ENCODE measurements at regions of chr19 and their contacts with region 1.

Region 1: GRCh38 chr19:36054119-36054732 is at the start of gene THAP8:
- DNase-seq: peak; percentile 99 to 100 (median 100)
- ATAC-seq: peak; percentile 86
- H3K4me3 ChIP-seq: peak within 1 kb of the TSS; percentile 74 to 86
- H3K4me3 Mint-ChIP-seq: peak within 1 kb of the TSS; percentile 96
- H3K27ac ChIP-seq: peak within 1 kb of the TSS; percentile 95 to 96
- H3K27ac Mint-ChIP-seq: peak within 1 kb of the TSS; percentile 97
- H3K4me1 ChIP-seq: peaks cover 17% of the 10 kb centered on the region
- H3K4me1 Mint-ChIP-seq: peaks cover 27% of the 10 kb centered on the region
- H3K27me3 ChIP-seq: no peaks in the 10 kb centered on the region
- H3K27me3 Mint-ChIP-seq: no peaks in the 10 kb centered on the region
- CTCF ChIP-seq: peak; percentile 66
- total RNA-seq, gene THAP8: 0.31 to 0.57 TPM

Region 2: GRCh38 chr19:35748106-35749020 is 305.9 kb before region 1 on chr19 and contains the start of gene LIN37:
- CTCF ChIA-PET with region 1: no interaction called
- POLR2A ChIA-PET with region 1: no interaction called
- intact Hi-C with region 1: loop called (anchors 1 to 5 kb)
- DNase-seq: peak; percentile 97 to 100 (median 98)
- ATAC-seq: peak; percentile 72
- H3K4me3 ChIP-seq: peak within 1 kb of the TSS; percentile 84 to 99
- H3K4me3 Mint-ChIP-seq: peak within 1 kb of the TSS; percentile 98
- H3K27ac ChIP-seq: peak within 1 kb of the TSS; percentile 71 to 84
- H3K27ac Mint-ChIP-seq: peak within 1 kb of the TSS; percentile 95
- H3K4me1 ChIP-seq: peaks cover 41% of the 10 kb centered on the region
- H3K4me1 Mint-ChIP-seq: peaks cover 44% of the 10 kb centered on the region
- H3K27me3 ChIP-seq: no peaks in the 10 kb centered on the region
- H3K27me3 Mint-ChIP-seq: no peaks in the 10 kb centered on the region
- CTCF ChIP-seq: no peak
- total RNA-seq, gene LIN37: 5.5 to 9.3 TPM

Region 3: GRCh38 chr19:35856546-35857149 is 197.6 kb before region 1 on chr19 and contains the start of gene KIRREL2:
- CTCF ChIA-PET with region 1: no interaction called
- POLR2A ChIA-PET with region 1: no interaction called
- intact Hi-C with region 1: no loop called
- DNase-seq: peak in 6 of 9 experiments; percentile 10 to 57 (median 27)
- ATAC-seq: peak; percentile 62
- H3K4me3 ChIP-seq: peak within 1 kb of the TSS; percentile 60 to 71
- H3K4me3 Mint-ChIP-seq: peak within 1 kb of the TSS; percentile 84
- H3K27ac ChIP-seq: no peak within 1 kb of the TSS
- H3K27ac Mint-ChIP-seq: no peak within 1 kb of the TSS
- H3K4me1 ChIP-seq: peaks cover 12% of the 10 kb centered on the region
- H3K4me1 Mint-ChIP-seq: peaks cover 20% of the 10 kb centered on the region
- H3K27me3 ChIP-seq: peaks cover 15 to 21% of the 10 kb centered on the region in 2 experiments
- H3K27me3 Mint-ChIP-seq: peaks cover 52% of the 10 kb centered on the region
- CTCF ChIP-seq: no peak
- total RNA-seq, gene KIRREL2: 0.49 to 0.69 TPM

Region 4: DNA sequence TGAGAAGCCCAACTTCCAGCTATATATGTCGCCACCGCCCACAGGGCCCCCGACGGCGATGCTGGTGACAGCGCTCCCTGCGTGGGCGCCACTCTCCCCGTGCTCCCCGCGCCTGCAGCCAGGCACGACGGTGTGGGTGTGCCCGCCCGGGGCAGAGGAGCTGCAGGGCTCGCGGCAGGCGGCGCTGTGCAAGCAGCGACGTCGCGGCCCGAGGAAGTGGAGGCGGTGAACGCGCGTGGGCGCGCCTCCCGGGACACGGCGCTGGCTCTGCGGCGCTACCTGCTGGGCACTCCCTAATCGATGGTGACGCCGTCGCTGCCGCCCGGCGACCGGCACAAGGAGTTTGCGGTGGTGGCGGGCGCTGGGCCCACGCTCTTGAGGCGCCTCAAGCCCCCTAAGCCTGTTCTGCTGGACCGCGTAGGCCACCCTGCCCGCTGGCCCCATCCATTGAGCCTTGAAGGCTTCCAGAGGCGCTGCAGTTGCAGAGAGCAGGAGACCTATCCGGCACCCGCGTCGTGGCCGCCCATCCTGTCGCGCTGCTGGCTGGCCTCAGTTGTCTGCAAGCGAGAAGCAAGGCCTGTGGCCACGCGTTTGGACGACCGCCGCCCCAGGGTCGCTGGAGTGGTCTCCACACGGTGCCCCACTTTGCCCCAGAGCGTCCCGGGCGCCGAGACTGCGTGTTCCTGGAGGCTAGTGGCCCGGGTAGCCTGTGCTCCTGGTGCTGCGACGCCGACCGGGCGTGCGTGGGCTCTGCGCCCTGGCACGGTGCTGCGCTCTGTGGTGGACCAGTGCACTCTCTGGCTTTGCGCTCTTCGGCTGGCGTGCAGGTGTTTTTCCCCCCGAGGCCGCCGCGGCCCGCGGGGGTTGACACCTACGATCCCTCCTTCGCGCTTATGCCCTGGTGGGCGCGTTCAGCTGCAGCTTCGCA is 94.9 kb before region 1 on chr19:
- CTCF ChIA-PET with region 1: interaction called, 4 read pairs
- POLR2A ChIA-PET with region 1: interaction called, 3 read pairs
- intact Hi-C with region 1: loop called (anchors 1 to 5 kb)
- DNase-seq: peak; percentile 60 to 93 (median 82)
- ATAC-seq: peak; percentile 99
- H3K4me3 ChIP-seq: peak overlapping the region; percentile 57 to 62
- H3K4me3 Mint-ChIP-seq: peak overlapping the region; percentile 70
- H3K27ac ChIP-seq: peak overlapping the region in 1 of 2 experiments; percentile 25
- H3K27ac Mint-ChIP-seq: no peak overlapping the region
- H3K4me1 ChIP-seq: peaks cover 43% of the 10 kb centered on the region
- H3K4me1 Mint-ChIP-seq: peaks cover 37% of the 10 kb centered on the region
- H3K27me3 ChIP-seq: peaks cover 0 to 4% of the 10 kb centered on the region in 2 experiments
- H3K27me3 Mint-ChIP-seq: peaks cover 4% of the 10 kb centered on the region
- CTCF ChIP-seq: peak; percentile 77

Region 5: DNA sequence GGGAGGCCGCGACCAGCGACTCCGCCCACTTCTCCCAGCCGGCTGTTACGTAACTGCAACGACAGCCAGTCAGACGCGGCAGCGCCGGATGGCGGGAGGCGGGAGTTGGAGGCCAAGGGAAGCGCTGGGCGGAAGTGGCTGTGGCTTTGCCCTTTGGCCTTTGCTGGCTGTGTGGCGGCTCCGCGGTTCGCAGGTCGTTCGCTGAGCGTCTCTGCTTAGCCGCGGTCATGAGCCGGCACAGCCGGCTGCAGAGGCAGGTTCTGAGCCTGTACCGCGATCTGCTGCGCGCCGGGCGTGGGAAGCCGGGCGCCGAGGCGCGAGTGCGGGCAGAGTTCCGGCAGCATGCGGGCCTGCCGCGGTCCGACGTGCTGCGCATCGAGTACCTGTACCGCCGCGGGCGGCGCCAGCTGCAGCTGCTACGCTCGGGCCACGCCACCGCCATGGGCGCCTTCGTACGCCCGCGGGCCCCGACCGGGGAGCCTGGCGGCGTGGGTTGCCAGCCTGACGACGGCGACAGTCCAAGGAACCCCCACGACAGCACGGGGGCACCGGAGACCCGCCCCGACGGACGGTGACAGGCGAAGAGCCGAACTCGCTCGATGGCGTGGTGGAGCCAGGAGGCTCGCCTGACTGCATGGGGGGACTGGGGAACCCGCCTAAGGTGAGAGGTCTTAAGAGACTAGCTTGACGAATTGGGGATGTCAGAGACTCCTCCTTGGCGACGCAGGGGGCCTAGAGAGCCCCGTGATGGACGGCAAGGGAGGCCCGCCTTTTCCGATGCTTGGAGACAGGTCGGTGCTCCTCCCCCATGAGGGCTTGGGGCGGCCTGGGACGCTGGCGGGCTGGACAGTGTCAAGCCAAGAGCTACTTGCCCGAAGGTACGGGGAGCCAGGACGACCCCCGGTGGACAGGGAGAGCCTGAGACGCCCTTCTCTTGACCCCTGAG is 58.9 kb before region 1 on chr19 and contains the start of gene SDHAF1:
- CTCF ChIA-PET with region 1: interaction called, 3 read pairs
- POLR2A ChIA-PET with region 1: interaction called, 4 read pairs
- intact Hi-C with region 1: loop called (anchors 1 kb)
- DNase-seq: peak; percentile 80 to 96 (median 92)
- ATAC-seq: peak; percentile 88
- H3K4me3 ChIP-seq: peak within 1 kb of the TSS; percentile 73 to 95
- H3K4me3 Mint-ChIP-seq: peak within 1 kb of the TSS; percentile 93
- H3K27ac ChIP-seq: peak within 1 kb of the TSS; percentile 55 to 69
- H3K27ac Mint-ChIP-seq: peak within 1 kb of the TSS; percentile 94
- H3K4me1 ChIP-seq: peaks cover 22% of the 10 kb centered on the region
- H3K4me1 Mint-ChIP-seq: peaks cover 35% of the 10 kb centered on the region
- H3K27me3 ChIP-seq: peaks cover 0 to 4% of the 10 kb centered on the region in 2 experiments
- H3K27me3 Mint-ChIP-seq: no peaks in the 10 kb centered on the region
- CTCF ChIP-seq: no peak
- total RNA-seq, gene SDHAF1: 7.3 TPM

Region 6: GRCh38 chr19:36139473-36140303 is 85.5 kb after region 1 on chr19 and contains the start of gene CAPNS1:
- CTCF ChIA-PET with region 1: no interaction called
- POLR2A ChIA-PET with region 1: no interaction called
- intact Hi-C with region 1: loop called (anchors 1 kb)
- DNase-seq: peak; percentile 77 to 96 (median 92)
- ATAC-seq: peak; percentile 55
- H3K4me3 ChIP-seq: peak within 1 kb of the TSS; percentile 90 to 99
- H3K4me3 Mint-ChIP-seq: peak within 1 kb of the TSS; percentile 96
- H3K27ac ChIP-seq: peak within 1 kb of the TSS; percentile 83 to 90
- H3K27ac Mint-ChIP-seq: peak within 1 kb of the TSS; percentile 93
- H3K4me1 ChIP-seq: peaks cover 13% of the 10 kb centered on the region
- H3K4me1 Mint-ChIP-seq: peaks cover 14% of the 10 kb centered on the region
- H3K27me3 ChIP-seq: no peaks in the 10 kb centered on the region
- H3K27me3 Mint-ChIP-seq: no peaks in the 10 kb centered on the region
- CTCF ChIP-seq: peak; percentile 26
- total RNA-seq, gene CAPNS1: 141 to 146 TPM

Measured in CD8-positive, alpha-beta T cell (primary cell).